ENCODE measurements at regions of chr9 and their contacts with region 1.

Region 1: GRCh38 chr9:35675732-35676392 is 2.1 kb downstream of the CA9 start:
- DNase-seq: no peak
- ATAC-seq: no peak; the same call in 1 of the 2 replicates
- H3K4me3 ChIP-seq: peak overlapping the region; percentile 12; the same call in 1 of the 2 replicates
- H3K27ac ChIP-seq: no peak overlapping the region; the same call in 1 of the 2 replicates
- H3K4me1 ChIP-seq: peaks cover 19% of the 10 kb centered on the region
- H3K27me3 ChIP-seq: no peaks in the 10 kb centered on the region
- CTCF ChIP-seq: no peak
- POLR2A ChIP-seq: no peak
- RAD21 ChIP-seq: no peak

Region 2: DNA sequence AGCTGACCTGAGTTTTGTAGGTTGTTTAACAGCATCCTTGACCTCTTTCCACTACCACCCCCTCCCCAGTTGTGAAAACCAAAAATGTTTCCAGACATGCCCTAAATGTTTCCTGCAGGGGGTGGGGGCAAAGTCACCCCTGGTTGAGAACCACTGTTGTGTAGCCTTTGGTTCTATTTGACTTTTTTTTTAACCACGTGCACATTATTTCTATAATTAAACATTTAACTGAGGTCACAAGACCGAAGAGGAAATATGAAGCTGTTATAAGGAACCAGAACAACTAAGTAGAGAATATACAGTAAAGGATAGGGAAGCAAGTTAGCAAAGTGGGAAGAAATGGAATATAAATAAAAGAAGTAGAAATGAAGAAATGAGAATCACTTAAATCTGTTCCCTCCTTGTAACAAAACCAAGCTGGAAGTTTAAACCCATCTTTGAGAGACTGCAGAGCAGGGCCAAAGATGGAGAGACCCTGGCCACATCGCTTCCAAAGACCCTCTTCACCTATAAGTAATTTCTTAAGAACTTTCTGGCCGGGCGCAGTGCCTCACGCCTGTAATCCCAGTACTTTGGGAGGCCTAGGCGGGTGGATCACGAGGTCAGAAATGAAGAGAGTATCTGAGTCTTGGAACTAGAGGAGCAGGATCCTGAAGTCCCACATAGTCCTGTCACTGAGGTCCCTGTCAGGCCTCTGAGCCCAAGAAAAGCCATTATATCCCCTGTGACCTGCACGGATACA is 39.6 kb before region 1 on chr9:
- CTCF ChIA-PET with region 1: no interaction called
- POLR2A ChIA-PET with region 1: no interaction called
- dilution Hi-C with region 1: no loop called
- in situ Hi-C with region 1: no loop called
- intact Hi-C with region 1: no loop called
- DNase-seq: no peak
- ATAC-seq: no peak
- H3K4me3 ChIP-seq: no peak overlapping the region
- H3K27ac ChIP-seq: no peak overlapping the region
- H3K4me1 ChIP-seq: no peaks in the 10 kb centered on the region
- H3K27me3 ChIP-seq: no peaks in the 10 kb centered on the region; the same call in 1 of the 2 replicates
- CTCF ChIP-seq: no peak
- POLR2A ChIP-seq: no peak
- RAD21 ChIP-seq: no peak

Region 3: GRCh38 chr9:35664531-35665470 is 11.1 kb before region 1 on chr9 and contains the start of gene ARHGEF39:
- CTCF ChIA-PET with region 1: interaction called, 11 read pairs
- POLR2A ChIA-PET with region 1: interaction called, 11 read pairs
- dilution Hi-C with region 1: no loop called
- in situ Hi-C with region 1: no loop called
- intact Hi-C with region 1: loop called (anchors 1 kb)
- DNase-seq: peak; percentile 68
- ATAC-seq: peak; percentile 82
- H3K4me3 ChIP-seq: peak within 1 kb of the TSS; percentile 72
- H3K27ac ChIP-seq: peak within 1 kb of the TSS; percentile 75
- H3K4me1 ChIP-seq: peaks cover 25% of the 10 kb centered on the region
- H3K27me3 ChIP-seq: no peaks in the 10 kb centered on the region
- CTCF ChIP-seq: peak; percentile 23; the same call in 1 of the 2 replicates
- POLR2A ChIP-seq: peak; percentile 24; the same call in 1 of the 2 replicates
- RAD21 ChIP-seq: no peak
- total RNA-seq, gene ARHGEF39: 0.56 and 2.5 TPM in 2 replicates